ENCODE measurements at regions of chr10 and their contacts with region 1.

Region 1: GRCh38 chr10:15901889-15902288 is 41.6 kb upstream of the MINDY3 start:
- DNase-seq: no peak
- H3K4me3 ChIP-seq: no peak overlapping the region
- H3K4me3 Mint-ChIP-seq: no peak overlapping the region
- H3K27ac ChIP-seq: no peak overlapping the region
- H3K27ac Mint-ChIP-seq: no peak overlapping the region
- H3K4me1 ChIP-seq: no peaks in the 10 kb centered on the region
- H3K4me1 Mint-ChIP-seq: no peaks in the 10 kb centered on the region
- H3K27me3 ChIP-seq: peaks cover 0 to 4% of the 10 kb centered on the region in 2 donors
- H3K27me3 Mint-ChIP-seq: peaks cover 4 to 9% (median 9%) of the 10 kb centered on the region in 3 donors
- CTCF ChIP-seq: no peak

Region 2: GRCh38 chr10:15485684-15486316 is 416.1 kb before region 1 on chr10:
- intact Hi-C with region 1: no loop called
- DNase-seq: no peak
- H3K4me3 ChIP-seq: no peak overlapping the region
- H3K4me3 Mint-ChIP-seq: no peak overlapping the region
- H3K27ac ChIP-seq: no peak overlapping the region
- H3K27ac Mint-ChIP-seq: no peak overlapping the region
- H3K4me1 ChIP-seq: no peaks in the 10 kb centered on the region
- H3K4me1 Mint-ChIP-seq: no peaks in the 10 kb centered on the region
- H3K27me3 ChIP-seq: no peaks in the 10 kb centered on the region
- H3K27me3 Mint-ChIP-seq: peaks cover 1 to 3% (median 2%) of the 10 kb centered on the region in 3 donors
- CTCF ChIP-seq: no peak

Region 3: GRCh38 chr10:15960277-15960676 is 58.4 kb after region 1 on chr10:
- intact Hi-C with region 1: no loop called
- DNase-seq: no peak
- H3K4me3 ChIP-seq: no peak overlapping the region
- H3K4me3 Mint-ChIP-seq: no peak overlapping the region
- H3K27ac ChIP-seq: no peak overlapping the region
- H3K27ac Mint-ChIP-seq: no peak overlapping the region
- H3K4me1 ChIP-seq: no peaks in the 10 kb centered on the region
- H3K4me1 Mint-ChIP-seq: no peaks in the 10 kb centered on the region
- H3K27me3 ChIP-seq: no peaks in the 10 kb centered on the region
- H3K27me3 Mint-ChIP-seq: peaks cover 0 to 2% (median 0%) of the 10 kb centered on the region in 3 donors
- CTCF ChIP-seq: no peak

Region 4: GRCh38 chr10:16777473-16778370 is 875.8 kb after region 1 on chr10:
- intact Hi-C with region 1: loop called in 1 of 2 experiments (anchors 10 kb)
- DNase-seq: peak; percentile 18 to 49 (median 48)
- H3K4me3 ChIP-seq: no peak overlapping the region
- H3K4me3 Mint-ChIP-seq: no peak overlapping the region
- H3K27ac ChIP-seq: no peak overlapping the region
- H3K27ac Mint-ChIP-seq: peak overlapping the region in 2 of 7 donors; percentile 46 to 82
- H3K4me1 ChIP-seq: no peaks in the 10 kb centered on the region
- H3K4me1 Mint-ChIP-seq: peaks cover 4% of the 10 kb centered on the region
- H3K27me3 ChIP-seq: no peaks in the 10 kb centered on the region
- H3K27me3 Mint-ChIP-seq: no peaks in the 10 kb centered on the region
- CTCF ChIP-seq: peak; percentile 86

Measured in CD14-positive monocyte (primary cell).